PC-9 (cell line): ENCODE measurements at regions of chr3 and their contacts with region 1.

Region 1: GRCh38 chr3:101849051-101849720 is at the start of gene NFKBIZ:
- DNase-seq: peak; percentile 91 to 99
- H3K4me3 ChIP-seq: peak within 1 kb of the TSS; percentile 88
- H3K27ac ChIP-seq: peak within 1 kb of the TSS; percentile 80
- H3K4me1 ChIP-seq: peaks cover 24% of the 10 kb centered on the region
- H3K27me3 ChIP-seq: no peaks in the 10 kb centered on the region
- CTCF ChIP-seq: no peak
- total RNA-seq, gene NFKBIZ: 44.9 and 57.7 TPM in 2 replicates

Region 2: GRCh38 chr3:101816215-101817149 is 32.7 kb before region 1 on chr3:
- CTCF ChIA-PET with region 1: no interaction called
- POLR2A ChIA-PET with region 1: interaction called, 11 read pairs
- intact Hi-C with region 1: loop called (anchors 1 kb)
- DNase-seq: peak in 1 of 2 experiments; percentile 85
- H3K4me3 ChIP-seq: no peak overlapping the region
- H3K27ac ChIP-seq: peak overlapping the region; percentile 18; the same call in 1 of the 2 replicates
- H3K4me1 ChIP-seq: peaks cover 10% of the 10 kb centered on the region; the same call in 1 of the 2 replicates
- H3K27me3 ChIP-seq: no peaks in the 10 kb centered on the region
- CTCF ChIP-seq: no peak

Region 3: GRCh38 chr3:101827211-101828174 is 21.7 kb before region 1 on chr3:
- CTCF ChIA-PET with region 1: no interaction called
- POLR2A ChIA-PET with region 1: interaction called, 20 read pairs
- intact Hi-C with region 1: loop called (anchors 1 kb)
- DNase-seq: peak; percentile 67 to 73
- H3K4me3 ChIP-seq: peak overlapping the region; percentile 74
- H3K27ac ChIP-seq: peak overlapping the region; percentile 56
- H3K4me1 ChIP-seq: peaks cover 23% of the 10 kb centered on the region
- H3K27me3 ChIP-seq: no peaks in the 10 kb centered on the region
- CTCF ChIP-seq: no peak